Naive thymus-derived CD4-positive, alpha-beta T cell (primary cell): ENCODE measurements at regions of chr9 and their contacts with region 1.

Region 1: GRCh38 chr9:6412487-6413364 is at the start of gene UHRF2:
- DNase-seq: peak; percentile 88 to 99 (median 97)
- ATAC-seq: peak; percentile 93
- H3K4me3 ChIP-seq: peak within 1 kb of the TSS; percentile 67
- H3K4me3 Mint-ChIP-seq: peak within 1 kb of the TSS; percentile 80 to 98 (median 92)
- H3K27ac ChIP-seq: peak within 1 kb of the TSS; percentile 86
- H3K27ac Mint-ChIP-seq: peak within 1 kb of the TSS; percentile 87 to 98 (median 95)
- H3K4me1 ChIP-seq: peaks cover 20 to 26% of the 10 kb centered on the region in 2 donors
- H3K4me1 Mint-ChIP-seq: peaks cover 23 to 41% (median 35%) of the 10 kb centered on the region in 7 donors
- H3K27me3 ChIP-seq: no peaks in the 10 kb centered on the region
- H3K27me3 Mint-ChIP-seq: peaks cover 0 to 9% (median 0%) of the 10 kb centered on the region in 5 donors
- total RNA-seq, gene UHRF2: 78.7 to 117 (median 111) TPM

Region 2: GRCh38 chr9:4679268-4680172 is 1733.2 kb before region 1 on chr9 and contains the start of gene CDC37L1:
- CTCF ChIA-PET with region 1: no interaction called
- POLR2A ChIA-PET with region 1: no interaction called
- intact Hi-C with region 1: loop called in 1 of 2 experiments (anchors 1 kb)
- DNase-seq: peak; percentile 98 to 100 (median 99)
- ATAC-seq: peak; percentile 98
- H3K4me3 ChIP-seq: peak within 1 kb of the TSS; percentile 72
- H3K4me3 Mint-ChIP-seq: no peak within 1 kb of the TSS
- H3K27ac ChIP-seq: peak within 1 kb of the TSS; percentile 95
- H3K27ac Mint-ChIP-seq: no peak within 1 kb of the TSS
- H3K4me1 ChIP-seq: peaks cover 15 to 19% of the 10 kb centered on the region in 2 donors
- H3K4me1 Mint-ChIP-seq: peaks cover 9 to 19% (median 17%) of the 10 kb centered on the region in 7 donors
- H3K27me3 ChIP-seq: no peaks in the 10 kb centered on the region
- H3K27me3 Mint-ChIP-seq: no peaks in the 10 kb centered on the region
- total RNA-seq, gene CDC37L1: 13.4 to 28.0 (median 22.9) TPM

Region 3: DNA sequence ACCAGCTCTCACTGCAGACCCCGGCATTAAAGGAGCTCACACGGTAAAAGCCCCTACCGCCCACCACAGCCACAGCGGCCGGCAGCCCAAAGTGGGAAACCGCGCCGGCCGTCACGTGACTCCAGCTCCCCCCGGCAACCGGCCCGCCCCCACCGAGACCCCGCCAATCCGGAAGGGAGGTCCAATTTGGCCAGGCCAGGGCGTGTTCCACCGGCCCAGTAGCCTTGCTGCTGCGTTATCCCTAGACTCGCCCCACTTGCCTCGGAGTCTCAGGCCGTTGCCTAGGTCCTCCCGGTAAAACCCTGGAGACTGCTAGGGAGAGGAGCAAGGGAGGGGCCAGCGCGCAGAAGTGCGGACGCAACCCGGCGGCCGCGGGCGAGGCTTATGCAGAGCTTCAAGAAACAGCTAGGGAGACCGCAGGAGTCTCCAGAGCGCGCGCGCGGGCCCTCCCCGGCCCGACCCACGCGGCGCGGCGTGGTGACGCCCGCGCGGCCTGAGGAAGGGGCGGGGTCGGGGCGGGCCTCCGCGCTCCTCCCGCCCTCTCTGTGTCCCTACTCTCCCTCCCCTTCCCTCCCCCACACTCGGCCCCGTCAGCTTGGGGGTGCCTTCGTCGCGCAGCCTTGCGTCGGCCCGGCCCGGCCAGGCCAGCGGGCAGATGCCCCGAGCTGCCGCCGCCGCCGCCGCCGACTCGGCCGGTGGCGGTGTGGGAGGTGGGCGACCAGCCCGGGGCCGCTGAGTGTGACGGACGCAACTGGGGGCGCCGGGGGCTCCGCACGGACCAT is 784.0 kb before region 1 on chr9 and contains the start of gene RIC1:
- CTCF ChIA-PET with region 1: no interaction called
- POLR2A ChIA-PET with region 1: interaction called, 3 read pairs
- intact Hi-C with region 1: loop called (anchors 1 kb)
- DNase-seq: peak; percentile 85 to 91 (median 88)
- ATAC-seq: peak; percentile 94
- H3K4me3 ChIP-seq: peak within 1 kb of the TSS; percentile 88
- H3K4me3 Mint-ChIP-seq: peak within 1 kb of the TSS; percentile 94 to 100 (median 99)
- H3K27ac ChIP-seq: peak within 1 kb of the TSS; percentile 89
- H3K27ac Mint-ChIP-seq: peak within 1 kb of the TSS; percentile 94 to 99 (median 98)
- H3K4me1 ChIP-seq: peaks cover 10 to 49% of the 10 kb centered on the region in 2 donors
- H3K4me1 Mint-ChIP-seq: peaks cover 43 to 77% (median 65%) of the 10 kb centered on the region in 7 donors
- H3K27me3 ChIP-seq: no peaks in the 10 kb centered on the region
- H3K27me3 Mint-ChIP-seq: no peaks in the 10 kb centered on the region
- total RNA-seq, gene RIC1: 20.2 to 28.2 (median 25.9) TPM

Region 4: DNA sequence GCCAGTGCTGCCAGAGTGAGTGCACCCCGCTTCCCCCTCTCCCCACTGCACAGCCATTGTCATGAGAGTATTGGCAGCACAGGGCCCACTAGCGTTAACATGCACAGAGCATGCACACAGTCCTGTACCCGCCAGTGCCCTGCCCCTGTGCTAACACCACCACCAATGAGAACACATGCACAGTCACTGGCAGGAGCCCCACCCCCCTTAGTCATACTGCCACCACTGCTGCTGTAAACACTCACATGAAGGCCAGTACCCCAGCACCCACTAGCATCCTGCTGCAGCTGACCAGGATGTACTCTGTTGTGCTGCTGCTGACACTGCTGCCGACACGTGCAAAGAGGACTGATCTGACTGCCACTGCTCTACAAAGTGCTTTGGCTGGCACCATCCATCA is 377.8 kb before region 1 on chr9:
- CTCF ChIA-PET with region 1: no interaction called
- POLR2A ChIA-PET with region 1: no interaction called
- intact Hi-C with region 1: no loop called
- DNase-seq: no peak
- ATAC-seq: peak; percentile 14
- H3K4me3 ChIP-seq: no peak overlapping the region
- H3K4me3 Mint-ChIP-seq: no peak overlapping the region
- H3K27ac ChIP-seq: no peak overlapping the region
- H3K27ac Mint-ChIP-seq: no peak overlapping the region
- H3K4me1 ChIP-seq: no peaks in the 10 kb centered on the region
- H3K4me1 Mint-ChIP-seq: no peaks in the 10 kb centered on the region
- H3K27me3 ChIP-seq: peaks cover 0 to 3% of the 10 kb centered on the region in 2 donors
- H3K27me3 Mint-ChIP-seq: peaks cover 0 to 39% (median 6%) of the 10 kb centered on the region in 5 donors

Region 5: DNA sequence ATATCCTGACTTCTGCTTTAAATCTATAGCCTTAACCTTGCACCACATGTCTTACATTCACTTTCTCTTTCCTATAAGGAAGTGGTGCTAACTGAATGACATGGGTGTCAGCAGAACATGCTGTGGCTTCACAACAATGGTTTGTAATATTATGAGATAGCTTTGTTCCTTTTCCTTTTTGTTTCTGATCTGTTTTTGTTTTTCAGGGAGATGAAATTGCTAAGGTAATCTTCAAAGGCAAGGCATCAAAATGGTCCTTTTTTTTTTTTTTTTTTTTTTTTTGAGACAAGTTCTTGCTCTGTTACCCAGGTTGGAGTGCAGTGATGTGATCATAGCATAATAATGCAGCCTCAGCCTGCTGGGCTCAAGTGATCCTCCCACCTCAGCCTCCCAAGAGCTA is 343.7 kb before region 1 on chr9:
- CTCF ChIA-PET with region 1: no interaction called
- POLR2A ChIA-PET with region 1: interaction called, 9 read pairs
- intact Hi-C with region 1: loop called (anchors 1 kb)
- DNase-seq: peak in 7 of 9 donors; percentile 30 to 73 (median 63)
- ATAC-seq: peak; percentile 97
- H3K4me3 ChIP-seq: peak overlapping the region; percentile 16
- H3K4me3 Mint-ChIP-seq: peak overlapping the region; percentile 54 to 77 (median 72)
- H3K27ac ChIP-seq: peak overlapping the region; percentile 48
- H3K27ac Mint-ChIP-seq: peak overlapping the region; percentile 86 to 96 (median 93)
- H3K4me1 ChIP-seq: peaks cover 8 to 21% of the 10 kb centered on the region in 2 donors
- H3K4me1 Mint-ChIP-seq: peaks cover 17 to 28% (median 27%) of the 10 kb centered on the region in 7 donors
- H3K27me3 ChIP-seq: no peaks in the 10 kb centered on the region
- H3K27me3 Mint-ChIP-seq: no peaks in the 10 kb centered on the region

Region 6: GRCh38 chr9:6473149-6473548 is 60.4 kb after region 1 on chr9:
- CTCF ChIA-PET with region 1: no interaction called
- POLR2A ChIA-PET with region 1: interaction called, 10 read pairs
- intact Hi-C with region 1: loop called (anchors 5 kb)
- DNase-seq: no peak
- ATAC-seq: no peak
- H3K4me3 ChIP-seq: no peak overlapping the region
- H3K4me3 Mint-ChIP-seq: no peak overlapping the region
- H3K27ac ChIP-seq: no peak overlapping the region
- H3K27ac Mint-ChIP-seq: peak overlapping the region in 4 of 9 donors; percentile 14 to 50 (median 26)
- H3K4me1 ChIP-seq: no peaks in the 10 kb centered on the region
- H3K4me1 Mint-ChIP-seq: peaks cover 7 to 45% (median 11%) of the 10 kb centered on the region in 7 donors
- H3K27me3 ChIP-seq: no peaks in the 10 kb centered on the region
- H3K27me3 Mint-ChIP-seq: no peaks in the 10 kb centered on the region

Region 7: DNA sequence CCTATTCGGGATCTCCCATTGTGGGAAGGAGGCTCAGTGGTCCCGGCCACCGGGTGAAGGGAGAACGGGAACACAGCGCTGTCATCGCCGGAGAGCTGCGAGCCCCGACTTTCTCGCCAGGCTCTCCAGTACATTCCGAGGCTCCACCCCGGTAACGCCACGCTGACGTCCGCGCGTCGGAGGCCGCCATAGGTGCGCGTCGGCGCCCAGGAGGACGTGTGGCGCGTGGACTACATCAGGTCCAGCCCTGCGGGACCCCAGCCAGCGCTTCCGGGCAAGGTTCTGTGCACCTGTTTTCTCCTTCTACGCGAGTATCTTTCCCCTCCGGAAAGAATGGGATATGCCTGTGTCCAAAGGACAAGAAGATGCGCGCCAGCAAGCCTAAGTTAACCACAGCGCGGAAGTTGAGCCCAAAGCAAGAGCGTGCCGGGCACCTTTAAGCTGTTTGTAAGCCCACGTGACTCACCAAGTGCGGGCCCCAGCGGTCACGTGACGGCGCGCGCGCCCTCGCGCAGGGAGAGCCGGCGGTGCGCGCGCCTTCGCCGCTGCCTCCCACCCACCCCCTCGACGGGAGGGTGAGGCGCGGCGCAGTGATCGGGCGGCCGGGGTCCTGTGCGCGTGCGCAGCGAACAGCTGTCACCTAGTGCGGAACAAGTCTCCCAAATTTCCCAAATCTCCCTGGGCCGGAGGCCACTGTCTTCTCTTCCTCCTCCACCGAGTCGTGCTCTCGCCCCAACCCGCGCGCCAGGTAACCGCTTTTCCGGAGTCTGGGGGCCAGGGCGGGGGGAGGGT is 344.9 kb after region 1 on chr9 and contains the start of gene KDM4C:
- CTCF ChIA-PET with region 1: no interaction called
- POLR2A ChIA-PET with region 1: interaction called, 93 read pairs
- intact Hi-C with region 1: loop called (anchors 1 kb)
- DNase-seq: peak; percentile 92 to 97 (median 94)
- ATAC-seq: peak; percentile 87
- H3K4me3 ChIP-seq: peak within 1 kb of the TSS; percentile 71
- H3K4me3 Mint-ChIP-seq: peak within 1 kb of the TSS; percentile 89 to 99 (median 96)
- H3K27ac ChIP-seq: peak within 1 kb of the TSS; percentile 98
- H3K27ac Mint-ChIP-seq: peak within 1 kb of the TSS; percentile 98 to 100 (median 100)
- H3K4me1 ChIP-seq: peaks cover 9 to 12% of the 10 kb centered on the region in 2 donors
- H3K4me1 Mint-ChIP-seq: peaks cover 12 to 41% (median 26%) of the 10 kb centered on the region in 7 donors
- H3K27me3 ChIP-seq: no peaks in the 10 kb centered on the region
- H3K27me3 Mint-ChIP-seq: no peaks in the 10 kb centered on the region
- total RNA-seq, gene KDM4C: 68.6 to 100 (median 93.3) TPM